T-cell (primary cell): ENCODE measurements at regions of chr7 and their contacts with region 1.

Region 1: GRCh38 chr7:121000081-121000983 is 11.8 kb downstream of the CPED1 start:
- DNase-seq: no peak
- ATAC-seq: no peak
- H3K4me3 ChIP-seq: no peak overlapping the region
- H3K4me3 Mint-ChIP-seq: no peak overlapping the region
- H3K27ac ChIP-seq: no peak overlapping the region
- H3K27ac Mint-ChIP-seq: no peak overlapping the region
- H3K4me1 ChIP-seq: peaks cover 11 to 12% of the 10 kb centered on the region in 2 experiments
- H3K4me1 Mint-ChIP-seq: peaks cover 19 to 33% (median 24%) of the 10 kb centered on the region in 3 donors
- H3K27me3 ChIP-seq: no peaks in the 10 kb centered on the region
- H3K27me3 Mint-ChIP-seq: peaks cover 9 to 14% of the 10 kb centered on the region in 2 donors

Region 2: DNA sequence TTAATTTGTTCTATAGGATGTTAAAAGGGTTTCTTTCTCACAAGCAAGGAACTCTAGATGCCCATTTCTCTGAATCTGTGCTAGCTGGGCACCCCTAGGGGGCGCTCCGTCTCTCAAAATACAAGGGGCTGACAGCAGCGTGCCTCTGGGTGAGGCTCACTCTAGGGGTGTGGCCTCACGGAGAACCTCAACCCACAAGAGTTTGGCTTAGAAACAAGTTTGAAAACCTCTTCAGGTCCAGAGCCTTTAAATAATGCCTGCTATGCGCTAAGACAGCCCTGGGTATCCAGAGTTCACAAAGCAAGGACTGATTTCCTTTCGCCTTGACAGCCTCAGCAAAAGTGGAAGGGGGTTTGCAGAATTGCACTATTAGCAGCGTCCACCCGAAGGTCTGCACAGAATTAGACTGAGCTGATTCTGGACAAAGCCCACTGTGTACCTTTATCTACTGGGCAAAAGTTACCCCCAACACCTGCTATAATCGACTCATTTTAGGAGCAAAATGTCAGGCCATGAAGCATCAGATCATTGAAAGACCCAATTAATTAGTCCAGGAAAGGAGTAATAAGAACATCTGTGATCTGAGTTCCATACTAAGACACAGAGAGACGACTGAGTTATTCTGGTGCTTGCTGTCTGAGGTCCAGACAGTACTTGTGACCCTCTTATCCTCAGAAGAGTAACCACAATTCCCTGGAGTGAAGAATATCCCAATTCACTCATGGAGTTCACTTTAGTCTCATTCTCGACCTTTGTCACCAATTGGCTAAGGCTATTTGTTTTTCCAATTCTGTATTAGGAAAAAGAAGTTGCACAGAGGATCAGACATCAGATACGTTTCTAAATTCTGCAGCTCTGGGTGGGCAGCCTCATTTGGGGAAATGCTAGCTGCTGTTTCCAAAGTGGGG is 12.4 kb before region 1 on chr7:
- CTCF ChIA-PET with region 1: interaction called, 8 to 13 read pairs
- POLR2A ChIA-PET with region 1: interaction called in 1 of 2 experiments, 4 read pairs
- DNase-seq: peak; percentile 65 to 93 (median 84)
- ATAC-seq: peak; percentile 97 to 99 (median 98)
- H3K4me3 ChIP-seq: peak overlapping the region in 1 of 2 donors; percentile 28
- H3K4me3 Mint-ChIP-seq: peak overlapping the region; percentile 43 to 74 (median 60)
- H3K27ac ChIP-seq: no peak overlapping the region
- H3K27ac Mint-ChIP-seq: no peak overlapping the region
- H3K4me1 ChIP-seq: peaks cover 9 to 15% of the 10 kb centered on the region in 2 experiments
- H3K4me1 Mint-ChIP-seq: peaks cover 18 to 21% (median 21%) of the 10 kb centered on the region in 3 donors
- H3K27me3 ChIP-seq: peaks cover 0 to 24% of the 10 kb centered on the region in 2 experiments
- H3K27me3 Mint-ChIP-seq: peaks cover 45 to 55% of the 10 kb centered on the region in 2 donors